ENCODE measurements at regions of chr3 and their contacts with region 1.

Region 1: GRCh38 chr3:180973543-180973942 is 16.0 kb downstream of the DNAJC19 start:
- DNase-seq: no peak
- ATAC-seq: no peak
- H3K4me3 ChIP-seq: no peak overlapping the region
- H3K27ac ChIP-seq: no peak overlapping the region
- H3K4me1 ChIP-seq: no peaks in the 10 kb centered on the region
- H3K27me3 ChIP-seq: no peaks in the 10 kb centered on the region
- CTCF ChIP-seq: no peak
- POLR2A ChIP-seq: no peak
- RAD21 ChIP-seq: no peak

Region 2: GRCh38 chr3:179589143-179589542 is 1384.4 kb before region 1 on chr3:
- CTCF ChIA-PET with region 1: no interaction called
- POLR2A ChIA-PET with region 1: no interaction called
- dilution Hi-C with region 1: no loop called
- in situ Hi-C with region 1: loop called (anchors 25 kb)
- intact Hi-C with region 1: no loop called
- DNase-seq: peak; percentile 73
- ATAC-seq: no peak
- H3K4me3 ChIP-seq: no peak overlapping the region
- H3K27ac ChIP-seq: no peak overlapping the region
- H3K4me1 ChIP-seq: peaks cover 2% of the 10 kb centered on the region; the same call in 1 of the 2 replicates
- H3K27me3 ChIP-seq: no peaks in the 10 kb centered on the region
- CTCF ChIP-seq: no peak
- POLR2A ChIP-seq: no peak
- RAD21 ChIP-seq: no peak

Region 3: GRCh38 chr3:180617049-180617448 is 356.5 kb before region 1 on chr3:
- CTCF ChIA-PET with region 1: no interaction called
- POLR2A ChIA-PET with region 1: no interaction called
- dilution Hi-C with region 1: no loop called
- in situ Hi-C with region 1: no loop called
- intact Hi-C with region 1: loop called (anchors 10 kb)
- DNase-seq: no peak
- ATAC-seq: no peak
- H3K4me3 ChIP-seq: no peak overlapping the region
- H3K27ac ChIP-seq: no peak overlapping the region
- H3K4me1 ChIP-seq: no peaks in the 10 kb centered on the region
- H3K27me3 ChIP-seq: no peaks in the 10 kb centered on the region
- CTCF ChIP-seq: no peak
- POLR2A ChIP-seq: no peak
- RAD21 ChIP-seq: no peak

Region 4: DNA sequence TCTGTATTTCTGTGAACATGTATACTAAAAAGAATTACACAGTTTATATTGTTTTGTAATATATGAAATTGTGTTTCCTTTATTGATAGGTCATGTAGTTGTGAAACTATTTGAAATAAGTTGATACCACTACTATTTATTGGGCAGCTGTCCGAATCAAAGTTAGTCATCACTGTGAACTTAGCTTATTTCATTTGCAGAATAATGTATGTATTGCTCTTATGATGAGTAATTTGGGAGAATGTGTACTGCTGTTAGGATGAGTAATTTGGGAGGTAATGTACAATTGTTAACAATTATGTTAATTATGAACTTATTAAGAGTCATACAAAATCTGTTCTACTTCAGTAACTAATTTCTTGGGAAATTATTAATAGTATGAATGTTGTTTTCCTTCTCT is 38.9 kb before region 1 on chr3:
- CTCF ChIA-PET with region 1: no interaction called
- POLR2A ChIA-PET with region 1: no interaction called
- dilution Hi-C with region 1: no loop called
- in situ Hi-C with region 1: no loop called
- intact Hi-C with region 1: loop called (anchors 5 kb)
- DNase-seq: peak; percentile 33
- ATAC-seq: no peak
- H3K4me3 ChIP-seq: no peak overlapping the region
- H3K27ac ChIP-seq: no peak overlapping the region
- H3K4me1 ChIP-seq: 0 out of 2 replicates have a peak, but pooled peaks cover 3% of the 10 kb centered on the region
- H3K27me3 ChIP-seq: no peaks in the 10 kb centered on the region
- CTCF ChIP-seq: no peak
- POLR2A ChIP-seq: no peak
- RAD21 ChIP-seq: no peak